B cell (primary cell): ENCODE measurements at regions of chr12 and their contacts with region 1.

Region 1: GRCh38 chr12:57520053-57520871 is at the start of gene DDIT3:
- DNase-seq: peak; percentile 100
- ATAC-seq: peak; percentile 75
- H3K4me3 ChIP-seq: peak within 1 kb of the TSS; percentile 97 to 100 (median 98)
- H3K4me3 Mint-ChIP-seq: peak within 1 kb of the TSS; percentile 99
- H3K27ac ChIP-seq: peak within 1 kb of the TSS; percentile 98 to 100
- H3K27ac Mint-ChIP-seq: peak within 1 kb of the TSS; percentile 100
- H3K4me1 ChIP-seq: peaks cover 42 to 53% of the 10 kb centered on the region in 2 donors
- H3K4me1 Mint-ChIP-seq: peaks cover 57% of the 10 kb centered on the region
- H3K27me3 ChIP-seq: no peaks in the 10 kb centered on the region
- H3K27me3 Mint-ChIP-seq: no peaks in the 10 kb centered on the region
- CTCF ChIP-seq: no peak
- total RNA-seq, gene DDIT3: 35.6 and 39.5 TPM in 2 replicates

Region 2: GRCh38 chr12:56315622-56316473 is 1204.4 kb before region 1 on chr12 and contains the start of gene CNPY2:
- CTCF ChIA-PET with region 1: no interaction called
- POLR2A ChIA-PET with region 1: no interaction called
- intact Hi-C with region 1: loop called (anchors 5 kb)
- DNase-seq: peak; percentile 99
- ATAC-seq: peak; percentile 86
- H3K4me3 ChIP-seq: peak within 1 kb of the TSS; percentile 78 to 94 (median 91)
- H3K4me3 Mint-ChIP-seq: peak within 1 kb of the TSS; percentile 99
- H3K27ac ChIP-seq: peak within 1 kb of the TSS; percentile 67 to 90
- H3K27ac Mint-ChIP-seq: peak within 1 kb of the TSS; percentile 99
- H3K4me1 ChIP-seq: peaks cover 12 to 15% of the 10 kb centered on the region in 2 donors
- H3K4me1 Mint-ChIP-seq: peaks cover 10% of the 10 kb centered on the region
- H3K27me3 ChIP-seq: no peaks in the 10 kb centered on the region
- H3K27me3 Mint-ChIP-seq: no peaks in the 10 kb centered on the region
- CTCF ChIP-seq: no peak
- total RNA-seq, gene CNPY2: 89.0 and 91.2 TPM in 2 replicates

Region 3: DNA sequence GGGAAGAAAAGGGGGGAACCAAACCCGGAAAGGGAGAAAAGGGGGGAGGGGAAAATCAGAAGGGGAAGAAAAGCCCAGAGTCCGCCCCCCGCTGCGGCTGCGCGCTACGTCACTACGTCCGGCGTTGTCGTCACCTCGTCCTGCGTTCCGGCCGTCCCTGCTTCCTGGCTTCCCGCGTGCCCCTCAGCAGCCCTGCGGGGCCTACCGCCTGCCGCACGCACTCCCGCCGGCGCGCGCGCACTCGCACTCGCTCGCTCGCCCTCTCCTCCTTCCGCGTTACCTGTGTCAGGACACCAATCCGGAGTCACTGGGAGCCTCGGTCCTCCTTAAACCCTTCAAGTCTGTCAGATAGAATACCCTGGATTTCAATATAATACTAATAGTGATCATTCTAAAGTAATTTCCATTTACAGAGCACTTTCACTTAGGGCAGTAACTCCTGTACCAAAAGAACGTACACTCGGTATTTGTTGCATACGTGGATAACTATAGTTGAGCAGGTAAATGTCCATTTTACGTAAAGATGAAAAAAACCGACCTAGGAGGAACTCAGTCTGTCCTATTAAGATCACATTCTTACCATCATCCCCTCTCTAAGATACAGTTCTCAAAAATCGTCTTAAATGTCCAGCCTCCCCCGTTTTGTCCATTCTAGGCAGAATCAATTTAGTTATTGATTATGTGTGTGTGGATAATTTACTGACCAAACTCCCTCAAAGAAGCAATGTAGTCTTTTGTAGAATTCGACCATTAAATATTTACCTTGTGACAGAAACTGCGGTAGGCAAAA is 89.1 kb before region 1 on chr12 and contains the start of gene R3HDM2:
- CTCF ChIA-PET with region 1: no interaction called
- POLR2A ChIA-PET with region 1: no interaction called
- intact Hi-C with region 1: loop called (anchors 1 kb)
- DNase-seq: peak; percentile 97
- ATAC-seq: peak; percentile 91
- H3K4me3 ChIP-seq: peak within 1 kb of the TSS; percentile 60 to 94 (median 64)
- H3K4me3 Mint-ChIP-seq: peak within 1 kb of the TSS; percentile 99
- H3K27ac ChIP-seq: peak within 1 kb of the TSS; percentile 96
- H3K27ac Mint-ChIP-seq: peak within 1 kb of the TSS; percentile 99
- H3K4me1 ChIP-seq: peaks cover 13 to 19% of the 10 kb centered on the region in 2 donors
- H3K4me1 Mint-ChIP-seq: peaks cover 41% of the 10 kb centered on the region
- H3K27me3 ChIP-seq: no peaks in the 10 kb centered on the region
- H3K27me3 Mint-ChIP-seq: no peaks in the 10 kb centered on the region
- CTCF ChIP-seq: no peak
- total RNA-seq, gene R3HDM2: 129 TPM in 2 replicates

Region 4: GRCh38 chr12:57487597-57488401 is 32.5 kb before region 1 on chr12 and contains the start of gene MARS1:
- CTCF ChIA-PET with region 1: no interaction called
- POLR2A ChIA-PET with region 1: interaction called, 11 read pairs
- intact Hi-C with region 1: loop called (anchors 1 kb)
- DNase-seq: peak; percentile 96
- ATAC-seq: peak; percentile 98
- H3K4me3 ChIP-seq: peak within 1 kb of the TSS; percentile 66 to 95 (median 86)
- H3K4me3 Mint-ChIP-seq: peak within 1 kb of the TSS; percentile 89
- H3K27ac ChIP-seq: peak within 1 kb of the TSS; percentile 42 to 86
- H3K27ac Mint-ChIP-seq: peak within 1 kb of the TSS; percentile 93
- H3K4me1 ChIP-seq: peaks cover 20 to 25% of the 10 kb centered on the region in 2 donors
- H3K4me1 Mint-ChIP-seq: peaks cover 31% of the 10 kb centered on the region
- H3K27me3 ChIP-seq: no peaks in the 10 kb centered on the region
- H3K27me3 Mint-ChIP-seq: no peaks in the 10 kb centered on the region
- CTCF ChIP-seq: no peak
- total RNA-seq, gene MARS1: 183 and 193 TPM in 2 replicates

Region 5: GRCh38 chr12:57621497-57622292 is 101.4 kb after region 1 on chr12:
- CTCF ChIA-PET with region 1: interaction called, 5 read pairs
- POLR2A ChIA-PET with region 1: no interaction called
- intact Hi-C with region 1: loop called (anchors 5 kb)
- DNase-seq: peak; percentile 76
- ATAC-seq: peak; percentile 78
- H3K4me3 ChIP-seq: peak overlapping the region; percentile 13 to 51 (median 47)
- H3K4me3 Mint-ChIP-seq: peak overlapping the region; percentile 85
- H3K27ac ChIP-seq: no peak overlapping the region
- H3K27ac Mint-ChIP-seq: no peak overlapping the region
- H3K4me1 ChIP-seq: peaks cover 32 to 48% of the 10 kb centered on the region in 2 donors
- H3K4me1 Mint-ChIP-seq: peaks cover 37% of the 10 kb centered on the region
- H3K27me3 ChIP-seq: peaks cover 0 to 92% (median 69%) of the 10 kb centered on the region in 4 experiments
- H3K27me3 Mint-ChIP-seq: peaks cover 88% of the 10 kb centered on the region
- CTCF ChIP-seq: peak; percentile 97

Region 6: DNA sequence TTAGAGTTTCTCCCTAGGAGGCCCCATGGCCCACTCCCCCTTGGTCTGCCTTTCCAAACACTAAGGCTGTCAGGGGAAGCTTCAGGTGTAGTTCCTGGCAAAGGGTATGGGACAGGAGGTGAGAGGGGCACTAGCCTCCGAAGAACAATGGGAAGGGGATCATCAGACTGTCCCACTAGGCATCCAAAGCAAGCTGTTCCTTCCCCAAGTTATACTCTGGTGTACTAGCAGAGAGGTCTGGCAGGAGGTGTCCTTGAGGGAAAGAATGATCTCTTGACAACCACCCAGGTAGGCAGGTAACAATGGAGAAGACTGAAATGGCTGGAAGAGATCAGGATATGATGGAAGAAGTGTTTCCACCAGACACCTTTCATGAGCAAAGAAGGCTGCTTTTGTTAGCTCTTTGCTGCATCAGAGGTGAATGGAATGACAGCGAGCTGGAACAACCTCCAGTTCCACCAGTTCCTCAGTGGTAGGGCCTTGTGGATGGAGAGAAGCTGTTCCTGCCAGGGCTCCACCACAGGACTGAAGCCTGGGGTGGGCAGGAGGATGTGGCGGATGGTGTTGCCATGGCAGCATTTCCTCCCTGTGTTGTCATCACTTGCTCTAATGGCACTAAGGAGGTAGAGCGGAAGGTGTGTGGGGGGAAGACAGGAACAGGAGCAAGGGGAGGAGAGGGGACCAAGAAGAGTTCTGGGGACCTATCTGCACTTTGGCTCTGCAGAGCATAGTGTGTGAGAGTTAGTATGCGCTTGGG is 220.6 kb after region 1 on chr12:
- CTCF ChIA-PET with region 1: no interaction called
- POLR2A ChIA-PET with region 1: no interaction called
- intact Hi-C with region 1: no loop called
- DNase-seq: peak; percentile 78
- ATAC-seq: peak; percentile 29
- H3K4me3 ChIP-seq: peak overlapping the region; percentile 43 to 79 (median 62)
- H3K4me3 Mint-ChIP-seq: peak overlapping the region; percentile 84
- H3K27ac ChIP-seq: peak overlapping the region; percentile 45 to 70
- H3K27ac Mint-ChIP-seq: peak overlapping the region; percentile 83
- H3K4me1 ChIP-seq: peaks cover 43 to 56% of the 10 kb centered on the region in 2 donors
- H3K4me1 Mint-ChIP-seq: peaks cover 52% of the 10 kb centered on the region
- H3K27me3 ChIP-seq: no peaks in the 10 kb centered on the region
- H3K27me3 Mint-ChIP-seq: no peaks in the 10 kb centered on the region
- CTCF ChIP-seq: no peak

Region 7: DNA sequence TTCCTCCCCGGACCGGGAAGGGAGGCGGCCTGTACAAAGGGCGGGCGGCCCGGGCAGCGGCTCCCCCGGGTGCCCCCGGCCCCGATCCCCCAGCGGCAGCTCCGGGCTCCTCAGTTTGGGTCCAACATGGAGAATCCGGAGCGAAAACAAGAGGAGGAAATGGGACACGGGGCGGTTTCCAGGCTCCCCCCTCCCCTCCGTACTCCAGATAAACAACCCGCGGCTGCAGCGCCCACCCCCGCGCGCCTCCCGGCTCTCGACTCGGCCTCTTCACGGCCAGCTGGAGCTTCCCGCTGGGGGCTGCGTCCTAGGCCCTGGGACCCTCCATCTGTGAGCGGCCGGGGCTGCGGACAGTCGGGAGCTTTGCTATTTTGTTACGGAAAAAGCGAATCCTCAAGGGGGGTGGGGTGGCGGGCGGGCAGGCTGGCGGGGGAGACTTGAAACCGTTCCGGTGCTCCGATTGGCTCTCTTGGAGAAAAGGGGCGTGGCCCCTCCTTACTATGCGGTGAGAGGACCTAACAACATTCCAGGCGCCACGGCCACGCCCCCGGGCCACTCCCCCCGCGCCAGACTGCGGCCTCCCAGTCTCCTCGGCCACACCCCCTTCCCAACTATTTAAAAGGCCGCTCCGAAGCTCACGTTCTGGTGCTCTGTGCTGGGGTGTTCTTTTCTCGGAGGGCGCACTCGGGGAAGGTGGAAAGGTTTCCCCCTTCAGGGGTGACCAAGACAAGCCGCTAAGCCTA is 326.5 kb after region 1 on chr12 and contains the start of gene CTDSP2:
- CTCF ChIA-PET with region 1: no interaction called
- POLR2A ChIA-PET with region 1: no interaction called
- intact Hi-C with region 1: loop called (anchors 2 kb)
- DNase-seq: peak; percentile 91
- ATAC-seq: peak; percentile 70
- H3K4me3 ChIP-seq: peak within 1 kb of the TSS; percentile 48 to 98 (median 93)
- H3K4me3 Mint-ChIP-seq: peak within 1 kb of the TSS; percentile 84
- H3K27ac ChIP-seq: peak within 1 kb of the TSS; percentile 75 to 84
- H3K27ac Mint-ChIP-seq: peak within 1 kb of the TSS; percentile 90
- H3K4me1 ChIP-seq: peaks cover 43 to 52% of the 10 kb centered on the region in 2 donors
- H3K4me1 Mint-ChIP-seq: peaks cover 47% of the 10 kb centered on the region
- H3K27me3 ChIP-seq: peaks cover 0 to 7% (median 1%) of the 10 kb centered on the region in 4 experiments
- H3K27me3 Mint-ChIP-seq: peaks cover 9% of the 10 kb centered on the region
- CTCF ChIP-seq: no peak
- total RNA-seq, gene CTDSP2: 203 and 209 TPM in 2 replicates